ENCODE measurements at regions of chr14 and their contacts with region 1.

Region 1: GRCh38 chr14:69726761-69727511 is 40.0 kb upstream of the SRSF5 start:
- DNase-seq: peak; percentile 58 to 94 (median 86)

Region 2: DNA sequence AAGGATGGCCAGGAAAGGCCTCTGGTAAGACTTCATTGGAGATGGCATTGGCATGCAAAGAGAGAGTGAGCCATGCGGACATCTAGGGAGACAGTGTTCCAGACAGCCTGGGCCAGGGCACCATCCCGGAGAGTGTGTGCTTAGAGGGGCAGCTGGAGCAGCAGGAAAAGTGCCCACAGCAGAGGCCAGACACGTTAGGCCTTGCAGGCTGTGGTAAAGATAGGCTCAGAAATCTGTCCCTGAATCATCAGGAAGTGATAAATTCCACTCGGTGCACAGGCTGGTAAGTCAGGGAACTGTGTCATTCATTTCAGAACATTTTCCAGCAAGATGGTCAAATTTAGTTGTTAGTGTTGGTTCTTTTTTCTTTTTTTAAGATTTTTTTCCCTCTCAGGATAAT is 458.2 kb before region 1 on chr14:
- intact Hi-C with region 1: no loop called
- DNase-seq: no peak

Region 3: GRCh38 chr14:69584389-69584788 is 142.5 kb before region 1 on chr14:
- intact Hi-C with region 1: loop called (anchors 2 kb)
- DNase-seq: no peak

Region 4: GRCh38 chr14:69600304-69600891 is 126.5 kb before region 1 on chr14:
- intact Hi-C with region 1: loop called (anchors 5 kb)
- DNase-seq: no peak